Activated B cell treated with CpG ODN at 0.5 μM for 24 hours (primary cell): ENCODE measurements at regions of chr1 and their contacts with region 1.

Region 1: GRCh38 chr1:23908493-23909341 is 4.4 kb downstream of the CNR2 start:
- DNase-seq: peak; percentile 59
- ATAC-seq: peak; percentile 63
- H3K4me3 Mint-ChIP-seq: peak overlapping the region; percentile 98
- H3K27ac Mint-ChIP-seq: peak overlapping the region; percentile 99
- H3K4me1 Mint-ChIP-seq: peaks cover 94% of the 10 kb centered on the region
- H3K27me3 Mint-ChIP-seq: no peaks in the 10 kb centered on the region
- CTCF ChIP-seq: no peak

Region 2: DNA sequence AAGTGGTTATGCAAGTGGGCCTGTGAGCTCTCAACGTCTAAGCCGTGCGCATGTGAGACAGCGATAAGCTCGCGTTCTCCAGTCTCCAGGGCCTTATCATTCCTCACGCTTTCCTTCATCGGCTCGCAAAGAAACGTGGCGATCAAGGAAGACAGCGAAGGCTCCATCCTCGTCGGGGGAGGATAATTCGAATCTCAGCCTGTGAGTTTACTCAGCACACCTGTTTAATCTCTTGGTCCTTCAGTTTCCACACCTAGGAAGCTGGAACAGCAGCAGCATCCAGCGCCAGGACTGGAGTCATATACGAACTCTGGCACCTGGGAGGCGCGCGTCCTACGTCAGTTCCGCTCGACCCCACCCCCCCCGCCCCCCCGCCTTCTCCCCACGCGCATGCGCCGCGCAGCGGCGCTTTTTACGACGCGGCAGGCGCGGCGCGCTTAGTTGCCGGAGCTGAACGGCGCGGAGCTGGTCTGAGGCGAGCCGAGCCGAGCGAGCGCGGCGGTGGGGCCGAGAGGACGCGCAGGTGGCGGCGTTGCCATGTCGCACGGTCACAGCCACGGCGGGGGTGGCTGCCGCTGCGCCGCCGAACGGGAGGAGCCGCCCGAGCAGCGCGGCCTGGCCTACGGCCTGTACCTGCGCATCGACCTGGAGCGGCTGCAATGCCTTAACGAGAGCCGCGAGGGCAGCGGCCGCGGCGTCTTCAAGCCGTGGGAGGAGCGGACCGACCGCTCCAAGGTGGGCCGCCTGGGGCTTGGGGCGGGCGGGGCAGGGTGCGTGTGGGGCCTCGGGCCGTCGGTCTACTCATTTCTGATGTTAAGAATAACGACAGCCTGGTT is 130.5 kb before region 1 on chr1 and contains the start of gene PITHD1:
- CTCF ChIA-PET with region 1: no interaction called
- POLR2A ChIA-PET with region 1: interaction called, 13 read pairs
- intact Hi-C with region 1: no loop called
- DNase-seq: peak; percentile 83
- ATAC-seq: peak; percentile 86
- H3K4me3 Mint-ChIP-seq: peak within 1 kb of the TSS; percentile 91
- H3K27ac Mint-ChIP-seq: peak within 1 kb of the TSS; percentile 90
- H3K4me1 Mint-ChIP-seq: peaks cover 30% of the 10 kb centered on the region
- H3K27me3 Mint-ChIP-seq: no peaks in the 10 kb centered on the region
- CTCF ChIP-seq: no peak
- total RNA-seq, gene PITHD1: 58.7 and 63.3 TPM in 2 replicates

Region 3: DNA sequence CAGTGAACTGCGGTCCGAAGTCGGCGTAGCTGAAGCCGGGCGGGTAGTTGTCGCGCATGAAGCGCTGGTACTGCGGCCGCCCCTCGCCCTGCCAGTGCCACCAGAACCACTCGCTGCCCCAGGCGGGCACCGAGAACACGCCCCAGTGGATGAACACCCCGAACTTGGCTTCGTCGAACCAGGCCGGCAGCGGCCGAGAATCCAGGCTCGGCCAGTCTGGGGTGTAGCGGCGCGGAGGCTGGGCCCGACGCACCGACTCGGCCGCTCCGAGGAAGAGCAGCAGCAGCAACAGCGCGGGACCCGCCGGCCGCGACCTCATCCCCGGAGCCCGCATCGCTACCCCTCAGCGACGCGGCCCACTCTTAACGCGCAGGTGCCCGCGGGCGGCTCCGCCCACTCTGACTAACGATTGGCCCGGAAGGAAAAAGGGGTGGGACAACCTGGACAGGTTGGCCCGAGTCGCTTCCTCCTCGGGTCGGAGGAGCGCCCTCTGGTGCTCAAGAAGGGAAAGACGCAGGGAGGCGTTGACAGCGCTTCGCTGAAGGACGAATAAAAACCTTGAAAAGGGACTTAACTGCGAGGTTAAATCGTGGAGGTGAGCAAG is 40.7 kb before region 1 on chr1 and contains the start of gene FUCA1:
- CTCF ChIA-PET with region 1: interaction called, 5 read pairs
- POLR2A ChIA-PET with region 1: interaction called, 20 read pairs
- intact Hi-C with region 1: loop called (anchors 2 kb)
- DNase-seq: peak; percentile 92
- ATAC-seq: peak; percentile 97
- H3K4me3 Mint-ChIP-seq: peak within 1 kb of the TSS; percentile 84
- H3K27ac Mint-ChIP-seq: peak within 1 kb of the TSS; percentile 87
- H3K4me1 Mint-ChIP-seq: peaks cover 36% of the 10 kb centered on the region
- H3K27me3 Mint-ChIP-seq: no peaks in the 10 kb centered on the region
- CTCF ChIP-seq: no peak
- total RNA-seq, gene FUCA1: 9.5 and 10.7 TPM in 2 replicates

Region 4: DNA sequence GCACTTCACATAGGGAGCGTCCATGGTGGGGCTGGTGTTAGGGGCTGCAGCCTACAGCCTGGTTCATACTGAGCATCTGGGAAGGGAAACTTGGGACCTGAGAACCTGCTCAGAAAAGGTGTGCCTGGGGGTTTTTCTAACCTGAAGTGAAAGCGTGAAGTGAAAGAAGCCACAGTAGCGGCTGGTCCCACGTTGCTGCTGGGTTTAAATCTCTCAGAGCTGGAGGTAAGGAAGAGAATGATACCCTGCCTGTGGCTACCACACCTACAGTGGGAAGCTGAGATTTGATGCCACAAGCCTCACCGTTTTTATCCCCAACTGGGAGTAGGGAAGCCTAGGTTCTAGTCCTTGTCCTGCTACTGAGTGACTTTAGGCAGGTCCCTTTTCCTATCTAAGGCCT is 19.6 kb before region 1 on chr1:
- CTCF ChIA-PET with region 1: interaction called, 12 read pairs
- POLR2A ChIA-PET with region 1: interaction called, 208 read pairs
- intact Hi-C with region 1: loop called (anchors 1 kb)
- DNase-seq: peak; percentile 31
- ATAC-seq: peak; percentile 64
- H3K4me3 Mint-ChIP-seq: peak overlapping the region; percentile 74
- H3K27ac Mint-ChIP-seq: peak overlapping the region; percentile 97
- H3K4me1 Mint-ChIP-seq: peaks cover 81% of the 10 kb centered on the region
- H3K27me3 Mint-ChIP-seq: no peaks in the 10 kb centered on the region
- CTCF ChIP-seq: no peak

Region 5: GRCh38 chr1:23930861-23931490 is 22.3 kb after region 1 on chr1:
- CTCF ChIA-PET with region 1: interaction called, 6 read pairs
- POLR2A ChIA-PET with region 1: interaction called, 23 read pairs
- intact Hi-C with region 1: no loop called
- DNase-seq: no peak
- ATAC-seq: peak; percentile 86
- H3K4me3 Mint-ChIP-seq: peak overlapping the region; percentile 76
- H3K27ac Mint-ChIP-seq: peak overlapping the region; percentile 91
- H3K4me1 Mint-ChIP-seq: peaks cover 43% of the 10 kb centered on the region
- H3K27me3 Mint-ChIP-seq: no peaks in the 10 kb centered on the region
- CTCF ChIP-seq: no peak